AG04450 (cell line): ENCODE measurements at regions of chr6 and their contacts with region 1.

Region 1: GRCh38 chr6:42547407-42548329 is 16.2 kb upstream of the UBR2 start:
- DNase-seq: peak; percentile 45
- H3K4me3 ChIP-seq: peak overlapping the region; percentile 53
- H3K27ac ChIP-seq: no peak overlapping the region
- H3K27me3 ChIP-seq: no peaks in the 10 kb centered on the region
- CTCF ChIP-seq: peak; percentile 100

Region 2: DNA sequence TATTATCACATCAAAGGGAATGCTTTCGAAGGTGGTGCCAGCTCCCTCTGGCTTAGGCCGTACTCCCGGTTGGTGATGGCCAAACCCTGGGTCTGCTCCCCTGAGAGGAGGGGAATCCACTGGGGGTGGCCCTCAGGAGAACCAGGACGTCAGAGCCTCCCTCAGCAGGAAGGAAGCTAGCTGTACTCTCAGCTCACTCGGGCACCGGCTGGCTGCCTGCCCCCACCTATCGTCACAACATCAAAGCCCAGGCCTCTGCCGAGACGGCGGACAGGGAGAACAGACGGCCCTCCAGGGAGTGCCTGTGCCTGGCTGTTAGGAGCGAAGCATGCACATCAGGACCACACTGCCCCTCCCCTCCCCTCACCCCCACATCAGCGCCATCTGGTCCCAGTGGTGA is 791.3 kb before region 1 on chr6:
- CTCF ChIA-PET with region 1: no interaction called
- POLR2A ChIA-PET with region 1: no interaction called
- DNase-seq: no peak
- H3K4me3 ChIP-seq: no peak overlapping the region
- H3K27ac ChIP-seq: no peak overlapping the region
- H3K27me3 ChIP-seq: peaks cover 25% of the 10 kb centered on the region
- CTCF ChIP-seq: no peak

Region 3: GRCh38 chr6:42236030-42236429 is 311.6 kb before region 1 on chr6:
- CTCF ChIA-PET with region 1: interaction called, 34 read pairs
- POLR2A ChIA-PET with region 1: no interaction called
- DNase-seq: no peak
- H3K4me3 ChIP-seq: no peak overlapping the region
- H3K27ac ChIP-seq: no peak overlapping the region
- H3K27me3 ChIP-seq: no peaks in the 10 kb centered on the region
- CTCF ChIP-seq: no peak

Region 4: GRCh38 chr6:42304053-42304712 is 243.5 kb before region 1 on chr6:
- CTCF ChIA-PET with region 1: interaction called, 22 read pairs
- POLR2A ChIA-PET with region 1: no interaction called
- DNase-seq: no peak
- H3K4me3 ChIP-seq: no peak overlapping the region
- H3K27ac ChIP-seq: peak overlapping the region; percentile 47
- H3K27me3 ChIP-seq: no peaks in the 10 kb centered on the region
- CTCF ChIP-seq: no peak

Region 5: DNA sequence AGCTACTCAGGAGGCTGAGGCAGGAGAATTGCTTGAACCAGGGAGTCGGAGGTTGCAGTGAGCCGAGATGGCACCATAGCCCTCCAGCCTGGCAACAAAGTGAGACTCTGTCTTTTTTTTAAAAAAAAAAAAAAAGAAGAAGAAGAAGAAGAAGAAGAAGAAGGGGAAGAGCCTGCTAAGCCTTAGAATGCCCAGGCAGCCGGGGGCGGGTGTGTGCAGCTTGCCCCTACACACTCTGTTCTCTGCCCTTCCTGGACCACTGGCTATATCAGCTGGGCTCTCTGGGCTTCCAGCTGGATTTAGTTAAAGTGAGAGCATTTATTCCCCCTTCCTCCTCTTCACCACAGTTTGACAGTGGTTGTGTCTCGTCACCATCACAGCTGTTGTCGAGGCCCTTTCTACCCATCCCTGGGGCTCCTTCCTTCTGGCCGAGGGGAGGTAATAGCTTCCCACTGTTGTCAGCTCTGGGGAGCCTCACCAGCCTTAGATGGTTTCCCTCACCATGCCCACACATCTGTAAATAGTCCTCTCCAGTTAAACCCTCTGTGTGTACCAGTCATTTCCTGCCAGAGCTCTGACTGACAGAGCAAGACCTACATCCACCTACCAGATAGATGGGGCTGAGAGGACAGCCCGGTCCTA is 173.5 kb before region 1 on chr6:
- CTCF ChIA-PET with region 1: interaction called, 12 read pairs
- POLR2A ChIA-PET with region 1: no interaction called
- DNase-seq: no peak
- H3K4me3 ChIP-seq: no peak overlapping the region
- H3K27ac ChIP-seq: no peak overlapping the region
- H3K27me3 ChIP-seq: no peaks in the 10 kb centered on the region
- CTCF ChIP-seq: no peak

Region 6: DNA sequence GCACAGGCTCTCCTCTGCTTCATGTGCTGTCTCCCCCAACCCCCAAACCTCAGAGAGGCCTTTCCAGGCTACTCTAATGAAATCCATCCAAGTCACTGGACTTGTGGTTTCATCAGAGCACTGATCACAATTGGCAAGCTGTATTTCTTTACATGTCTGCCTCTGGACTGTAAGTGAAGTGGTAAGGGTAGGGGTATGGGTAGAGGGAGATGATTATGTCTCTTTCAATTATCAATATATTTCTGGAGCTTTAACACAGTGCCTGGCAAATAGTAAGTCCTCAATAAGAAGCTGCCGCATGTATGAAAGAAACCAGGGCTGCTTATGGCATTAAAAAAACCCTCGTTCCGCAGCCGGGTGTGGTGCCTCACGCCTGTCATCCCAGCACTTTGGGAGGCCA is 101.3 kb before region 1 on chr6:
- CTCF ChIA-PET with region 1: interaction called, 37 read pairs
- POLR2A ChIA-PET with region 1: interaction called, 3 read pairs
- DNase-seq: no peak
- H3K4me3 ChIP-seq: no peak overlapping the region
- H3K27ac ChIP-seq: no peak overlapping the region
- H3K27me3 ChIP-seq: no peaks in the 10 kb centered on the region
- CTCF ChIP-seq: no peak

Region 7: DNA sequence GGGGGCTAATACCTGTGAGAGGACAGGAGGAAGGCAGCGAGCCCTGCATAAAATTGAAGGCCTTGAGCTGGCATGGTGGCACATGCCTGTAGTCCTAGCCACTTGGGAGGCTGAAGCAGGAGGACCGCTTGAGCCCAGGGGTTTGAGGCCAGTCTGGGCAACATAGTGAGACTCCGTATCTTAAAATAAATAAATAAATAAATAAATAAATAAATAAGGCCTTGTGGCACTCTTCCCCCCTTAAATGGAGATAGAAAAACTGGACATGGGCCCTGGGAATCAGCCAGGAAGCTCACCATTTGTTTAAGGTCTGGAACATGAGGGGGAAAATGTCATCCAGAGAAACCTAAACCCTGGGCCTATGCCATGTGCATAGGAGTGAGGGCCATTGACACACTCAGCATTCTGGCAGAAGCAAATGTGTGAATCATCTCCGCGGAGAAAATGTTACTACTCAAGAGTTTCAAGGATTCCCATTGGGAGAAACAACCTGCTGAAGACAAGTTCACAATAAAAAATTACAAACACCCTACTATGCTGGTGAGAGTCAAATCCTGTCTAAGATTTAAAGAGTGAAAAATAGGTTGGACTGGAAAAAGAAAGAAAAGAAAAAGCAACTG is 35.8 kb before region 1 on chr6:
- CTCF ChIA-PET with region 1: interaction called, 10 read pairs
- POLR2A ChIA-PET with region 1: no interaction called
- DNase-seq: peak; percentile 18
- H3K4me3 ChIP-seq: no peak overlapping the region
- H3K27ac ChIP-seq: no peak overlapping the region
- H3K27me3 ChIP-seq: no peaks in the 10 kb centered on the region
- CTCF ChIP-seq: no peak